Gastrocnemius medialis (tissue), 4 donors: ENCODE measurements at regions of chr19 and their contacts with region 1.

Region 1: DNA sequence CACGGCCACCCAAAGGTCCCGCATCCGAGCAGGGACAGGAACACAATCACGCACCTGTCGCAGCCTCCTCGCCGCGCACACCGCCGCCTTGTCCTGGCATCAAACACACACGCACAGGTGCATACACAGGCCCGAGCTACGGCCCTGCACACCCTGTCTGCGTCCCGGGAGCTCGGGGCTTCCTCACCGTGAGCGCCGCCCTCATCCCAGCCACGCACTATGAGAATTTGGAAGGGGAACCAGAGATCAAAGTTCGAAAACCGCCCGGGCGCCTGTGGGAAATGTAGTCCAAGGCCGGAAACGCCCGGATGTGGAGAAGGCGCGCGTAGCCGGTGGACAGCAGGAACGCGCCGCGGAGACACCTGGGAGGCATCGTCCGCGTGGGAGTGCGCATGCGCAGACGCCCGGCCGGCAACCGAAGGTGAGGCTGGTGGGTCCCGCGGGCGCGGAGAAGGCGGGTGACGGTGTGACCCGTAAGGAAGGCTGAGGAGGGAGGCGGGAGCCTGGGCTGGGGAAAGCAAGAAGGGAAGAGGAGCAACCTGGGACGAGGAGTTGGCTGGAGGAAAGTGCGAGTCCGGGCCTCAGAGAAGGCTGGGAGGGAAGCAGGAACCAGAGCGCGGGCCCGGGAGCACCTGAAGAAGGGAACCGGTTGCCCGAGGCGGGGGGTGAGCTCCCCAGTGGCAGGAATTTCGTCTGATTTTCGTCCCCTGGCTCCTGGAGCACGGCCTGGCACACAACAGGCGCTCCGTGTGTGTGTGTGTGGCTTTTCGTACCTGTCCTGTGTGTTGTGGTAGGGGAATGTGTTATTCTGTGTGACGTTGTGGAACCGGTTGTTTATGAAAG is at the start of gene ZNF567:
- DNase-seq: peak; percentile 93 to 96
- ATAC-seq: peak; percentile 99
- H3K4me3 ChIP-seq: peak within 1 kb of the TSS; percentile 76 to 96 (median 90)
- H3K27ac ChIP-seq: peak within 1 kb of the TSS; percentile 77 to 87 (median 81)
- H3K4me1 ChIP-seq: peaks cover 13 to 16% of the 10 kb centered on the region in 2 donors
- H3K27me3 ChIP-seq: no peaks in the 10 kb centered on the region
- CTCF ChIP-seq: no peak
- POLR2A ChIP-seq: peak; percentile 68 to 74
- total RNA-seq, gene ZNF567: 1.1 to 3.5 (median 1.9) TPM

Region 2: GRCh38 chr19:36528194-36528920 is 159.1 kb before region 1 on chr19 and contains the start of gene ZNF260:
- in situ Hi-C with region 1: no loop called
- intact Hi-C with region 1: loop called (anchors 1 kb)
- DNase-seq: peak; percentile 96
- ATAC-seq: peak; percentile 99
- H3K4me3 ChIP-seq: peak within 1 kb of the TSS; percentile 71 to 83 (median 80)
- H3K27ac ChIP-seq: peak within 1 kb of the TSS; percentile 83 to 94 (median 90)
- H3K4me1 ChIP-seq: peaks cover 16 to 17% of the 10 kb centered on the region in 2 donors
- H3K27me3 ChIP-seq: no peaks in the 10 kb centered on the region
- CTCF ChIP-seq: no peak
- POLR2A ChIP-seq: peak; percentile 43 to 56
- total RNA-seq, gene ZNF260: 1.3 to 16.3 (median 3.2) TPM

Region 3: GRCh38 chr19:36665832-36666231 is 21.6 kb before region 1 on chr19:
- in situ Hi-C with region 1: no loop called
- intact Hi-C with region 1: loop called (anchors 1 kb)
- DNase-seq: no peak
- ATAC-seq: no peak
- H3K4me3 ChIP-seq: peak overlapping the region; percentile 82 to 97 (median 92)
- H3K27ac ChIP-seq: no peak overlapping the region
- H3K4me1 ChIP-seq: peaks cover 6 to 9% of the 10 kb centered on the region in 2 donors
- H3K27me3 ChIP-seq: no peaks in the 10 kb centered on the region
- CTCF ChIP-seq: no peak
- POLR2A ChIP-seq: no peak

Region 4: GRCh38 chr19:36837906-36838783 is 150.7 kb after region 1 on chr19 and contains the start of gene ZNF790:
- in situ Hi-C with region 1: no loop called
- intact Hi-C with region 1: loop called (anchors 1 kb)
- DNase-seq: peak; percentile 74 to 85
- ATAC-seq: peak; percentile 98 to 99
- H3K4me3 ChIP-seq: peak within 1 kb of the TSS; percentile 68 to 87 (median 79)
- H3K27ac ChIP-seq: peak within 1 kb of the TSS; percentile 74 to 90 (median 86)
- H3K4me1 ChIP-seq: peaks cover 8 to 9% of the 10 kb centered on the region in 2 donors
- H3K27me3 ChIP-seq: no peaks in the 10 kb centered on the region
- CTCF ChIP-seq: no peak
- POLR2A ChIP-seq: no peak
- total RNA-seq, gene ZNF790: 2.4 to 8.1 (median 5.2) TPM

Region 5: GRCh38 chr19:37172368-37173366 is 485.2 kb after region 1 on chr19 and contains the start of gene ZNF585A:
- in situ Hi-C with region 1: no loop called
- intact Hi-C with region 1: loop called (anchors 1 kb)
- DNase-seq: peak; percentile 90 to 93
- ATAC-seq: peak; percentile 100
- H3K4me3 ChIP-seq: peak within 1 kb of the TSS; percentile 74 to 85 (median 80)
- H3K27ac ChIP-seq: peak within 1 kb of the TSS; percentile 80 to 90 (median 84)
- H3K4me1 ChIP-seq: peaks cover 7 to 12% of the 10 kb centered on the region in 2 donors
- H3K27me3 ChIP-seq: no peaks in the 10 kb centered on the region
- CTCF ChIP-seq: peak in 2 of 5 experiments; percentile 21 to 32
- POLR2A ChIP-seq: peak in 1 of 2 donors; percentile 14
- total RNA-seq, gene ZNF585A: 2.0 to 10.5 (median 6.0) TPM